CD8-positive, alpha-beta T cell (primary cell): ENCODE measurements at regions of chr5 and their contacts with region 1.

Region 1: GRCh38 chr5:148368299-148368698 is 15.5 kb upstream of the FBXO38 start:
- DNase-seq: no peak
- ATAC-seq: no peak
- H3K4me3 ChIP-seq: no peak overlapping the region
- H3K4me3 Mint-ChIP-seq: no peak overlapping the region
- H3K27ac ChIP-seq: no peak overlapping the region
- H3K27ac Mint-ChIP-seq: no peak overlapping the region
- H3K4me1 ChIP-seq: no peaks in the 10 kb centered on the region
- H3K4me1 Mint-ChIP-seq: no peaks in the 10 kb centered on the region
- H3K27me3 ChIP-seq: no peaks in the 10 kb centered on the region
- H3K27me3 Mint-ChIP-seq: peaks cover 2% of the 10 kb centered on the region
- CTCF ChIP-seq: no peak

Region 2: DNA sequence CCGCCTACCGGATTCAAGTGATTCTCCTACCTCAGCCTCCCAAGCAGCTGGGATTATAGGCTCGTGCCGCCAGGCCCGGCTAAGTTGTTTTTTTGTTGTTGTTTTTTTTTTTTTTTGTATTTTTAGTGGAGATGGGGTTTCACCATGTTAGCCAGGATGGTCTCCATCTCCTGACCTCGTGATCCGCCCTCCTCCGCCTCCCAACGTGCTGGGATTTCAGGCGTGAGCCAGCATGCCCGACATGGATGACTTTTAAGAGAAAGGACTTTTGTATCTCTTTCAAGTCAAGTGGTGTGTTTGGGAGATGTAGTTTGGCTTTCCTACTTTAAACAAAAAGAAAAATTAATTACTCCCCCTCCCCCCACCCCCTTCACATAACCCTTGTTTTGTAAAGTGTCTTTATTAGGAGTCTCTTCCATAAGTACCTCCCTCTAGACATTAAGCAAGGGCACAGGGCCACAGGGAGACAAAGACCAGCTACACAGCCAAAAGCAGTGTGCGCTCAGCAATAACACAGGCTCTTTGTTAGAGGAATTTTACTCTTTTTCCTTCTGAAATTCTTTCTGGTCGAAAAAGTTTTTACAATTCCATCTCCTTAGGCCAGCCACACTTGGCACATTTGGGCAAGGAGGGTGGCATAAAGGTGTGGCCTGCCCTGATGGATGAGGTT is 617.0 kb before region 1 on chr5:
- CTCF ChIA-PET with region 1: no interaction called
- POLR2A ChIA-PET with region 1: no interaction called
- intact Hi-C with region 1: loop called in 1 of 2 experiments (anchors 5 kb)
- DNase-seq: no peak
- ATAC-seq: no peak
- H3K4me3 ChIP-seq: no peak overlapping the region
- H3K4me3 Mint-ChIP-seq: no peak overlapping the region
- H3K27ac ChIP-seq: no peak overlapping the region
- H3K27ac Mint-ChIP-seq: no peak overlapping the region
- H3K4me1 ChIP-seq: no peaks in the 10 kb centered on the region
- H3K4me1 Mint-ChIP-seq: peaks cover 3% of the 10 kb centered on the region
- H3K27me3 ChIP-seq: no peaks in the 10 kb centered on the region
- H3K27me3 Mint-ChIP-seq: no peaks in the 10 kb centered on the region
- CTCF ChIP-seq: no peak